T-cell (primary cell): ENCODE measurements at regions of chr12 and their contacts with region 1.

Region 1: DNA sequence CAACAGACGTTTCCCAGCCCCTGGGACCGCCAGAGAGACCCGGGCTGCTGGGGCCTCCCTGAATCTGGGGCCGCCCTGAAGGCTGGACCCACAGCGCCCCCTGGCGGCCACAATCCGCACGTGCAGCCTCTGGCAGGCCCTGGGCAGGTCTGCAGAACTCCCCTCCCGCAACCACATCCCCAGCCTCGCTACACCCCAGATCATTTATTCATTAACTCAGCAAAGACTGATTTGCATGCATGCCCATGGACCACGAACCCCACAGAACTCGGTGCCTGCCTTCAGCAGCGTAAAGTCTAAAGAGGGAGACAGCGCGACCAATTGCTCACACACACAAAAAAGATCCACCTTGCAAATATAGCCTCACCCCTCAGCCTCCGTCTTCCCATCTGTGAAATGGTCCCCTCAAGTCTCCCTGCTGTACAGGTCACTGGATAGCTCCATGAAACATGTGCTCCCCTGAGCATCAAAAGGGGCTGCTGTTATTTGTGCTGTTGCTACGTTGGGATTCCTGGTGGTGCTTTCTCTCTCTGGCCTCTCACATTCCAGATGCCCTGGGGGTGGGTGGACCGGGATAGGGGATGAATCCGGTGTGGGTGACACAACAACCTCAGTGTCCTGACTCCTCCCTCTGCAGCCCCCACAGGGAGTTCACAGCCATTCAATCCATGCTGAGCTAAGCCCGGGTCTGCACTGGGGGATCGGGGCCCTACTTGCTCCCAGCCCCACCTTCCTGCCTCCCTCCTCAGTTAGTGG is 96.4 kb downstream of the SCARB1 start:
- DNase-seq: peak; percentile 60 to 87 (median 81)
- ATAC-seq: peak; percentile 86 to 95 (median 92)
- H3K4me3 ChIP-seq: no peak overlapping the region
- H3K4me3 Mint-ChIP-seq: peak overlapping the region in 1 of 3 donors; percentile 12
- H3K27ac ChIP-seq: no peak overlapping the region
- H3K27ac Mint-ChIP-seq: peak overlapping the region in 1 of 2 donors; percentile 5
- H3K4me1 ChIP-seq: peaks cover 0 to 21% of the 10 kb centered on the region in 2 experiments
- H3K4me1 Mint-ChIP-seq: peaks cover 12 to 15% (median 13%) of the 10 kb centered on the region in 3 donors
- H3K27me3 ChIP-seq: peaks cover 0 to 32% of the 10 kb centered on the region in 2 experiments
- H3K27me3 Mint-ChIP-seq: peaks cover 4 to 6% of the 10 kb centered on the region in 2 donors

Region 2: DNA sequence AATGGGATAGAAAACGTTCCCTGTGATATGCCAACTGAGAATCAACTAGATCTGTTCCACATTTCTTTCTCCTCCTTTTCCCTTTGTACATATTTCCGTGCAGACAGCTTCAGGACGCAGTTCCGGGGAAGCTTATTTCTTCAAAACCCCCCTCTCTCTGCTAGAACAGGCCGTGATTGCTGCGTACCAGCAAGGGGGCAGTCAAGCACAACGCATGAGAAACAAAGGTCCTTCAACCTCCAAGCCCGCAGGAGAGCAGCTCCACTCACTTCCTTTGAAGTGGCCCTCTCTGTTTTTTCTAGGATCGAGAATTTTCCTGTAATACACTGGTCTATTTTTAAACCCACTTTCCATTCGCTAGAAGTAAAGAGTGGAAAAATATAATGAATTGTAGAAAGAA is 713.4 kb before region 1 on chr12:
- CTCF ChIA-PET with region 1: interaction called, 10 to 11 read pairs
- POLR2A ChIA-PET with region 1: no interaction called
- DNase-seq: peak in 1 of 35 experiments; percentile 12
- ATAC-seq: no peak
- H3K4me3 ChIP-seq: no peak overlapping the region
- H3K4me3 Mint-ChIP-seq: no peak overlapping the region
- H3K27ac ChIP-seq: no peak overlapping the region
- H3K27ac Mint-ChIP-seq: no peak overlapping the region
- H3K4me1 ChIP-seq: no peaks in the 10 kb centered on the region
- H3K4me1 Mint-ChIP-seq: no peaks in the 10 kb centered on the region
- H3K27me3 ChIP-seq: peaks cover 0 to 13% of the 10 kb centered on the region in 2 experiments
- H3K27me3 Mint-ChIP-seq: peaks cover 8 to 9% of the 10 kb centered on the region in 2 donors

Region 3: DNA sequence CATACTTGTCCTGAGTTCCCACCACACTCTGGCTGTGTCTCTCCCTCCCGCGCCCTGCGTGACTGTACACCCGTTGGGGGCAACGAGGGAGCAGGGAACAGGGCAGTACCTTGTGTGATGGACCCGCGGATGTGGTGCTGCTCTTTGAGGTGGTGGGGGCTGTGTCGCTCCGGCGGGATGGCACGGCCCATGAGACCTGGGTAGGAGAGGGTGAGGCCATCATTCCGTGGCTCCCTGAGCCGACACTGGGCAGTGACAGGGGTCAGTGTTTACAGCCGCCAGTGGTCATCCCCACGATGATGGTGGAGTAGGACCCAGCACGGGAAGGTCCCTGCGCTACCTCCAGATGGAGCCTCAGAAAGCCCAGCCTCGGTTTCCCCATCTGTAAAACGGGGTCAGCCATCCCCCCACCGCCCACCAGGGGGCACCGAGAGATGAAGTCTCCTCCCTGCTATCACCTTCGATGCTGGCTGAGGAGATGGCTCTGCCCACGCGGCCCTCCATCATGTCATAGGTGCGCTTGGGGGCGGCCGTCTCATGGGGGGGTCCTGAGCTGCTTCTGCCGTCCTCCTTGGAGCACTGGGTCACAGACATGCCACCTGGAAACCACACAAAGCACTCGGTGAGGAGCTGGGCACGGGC is 419.4 kb before region 1 on chr12:
- CTCF ChIA-PET with region 1: interaction called, 4 to 10 read pairs
- POLR2A ChIA-PET with region 1: no interaction called
- DNase-seq: peak in 20 of 35 experiments; percentile 6 to 38 (median 18)
- ATAC-seq: peak in 2 of 4 experiments; percentile 24 to 39
- H3K4me3 ChIP-seq: no peak overlapping the region
- H3K4me3 Mint-ChIP-seq: no peak overlapping the region
- H3K27ac ChIP-seq: no peak overlapping the region
- H3K27ac Mint-ChIP-seq: no peak overlapping the region
- H3K4me1 ChIP-seq: no peaks in the 10 kb centered on the region
- H3K4me1 Mint-ChIP-seq: no peaks in the 10 kb centered on the region
- H3K27me3 ChIP-seq: no peaks in the 10 kb centered on the region
- H3K27me3 Mint-ChIP-seq: no peaks in the 10 kb centered on the region

Region 4: DNA sequence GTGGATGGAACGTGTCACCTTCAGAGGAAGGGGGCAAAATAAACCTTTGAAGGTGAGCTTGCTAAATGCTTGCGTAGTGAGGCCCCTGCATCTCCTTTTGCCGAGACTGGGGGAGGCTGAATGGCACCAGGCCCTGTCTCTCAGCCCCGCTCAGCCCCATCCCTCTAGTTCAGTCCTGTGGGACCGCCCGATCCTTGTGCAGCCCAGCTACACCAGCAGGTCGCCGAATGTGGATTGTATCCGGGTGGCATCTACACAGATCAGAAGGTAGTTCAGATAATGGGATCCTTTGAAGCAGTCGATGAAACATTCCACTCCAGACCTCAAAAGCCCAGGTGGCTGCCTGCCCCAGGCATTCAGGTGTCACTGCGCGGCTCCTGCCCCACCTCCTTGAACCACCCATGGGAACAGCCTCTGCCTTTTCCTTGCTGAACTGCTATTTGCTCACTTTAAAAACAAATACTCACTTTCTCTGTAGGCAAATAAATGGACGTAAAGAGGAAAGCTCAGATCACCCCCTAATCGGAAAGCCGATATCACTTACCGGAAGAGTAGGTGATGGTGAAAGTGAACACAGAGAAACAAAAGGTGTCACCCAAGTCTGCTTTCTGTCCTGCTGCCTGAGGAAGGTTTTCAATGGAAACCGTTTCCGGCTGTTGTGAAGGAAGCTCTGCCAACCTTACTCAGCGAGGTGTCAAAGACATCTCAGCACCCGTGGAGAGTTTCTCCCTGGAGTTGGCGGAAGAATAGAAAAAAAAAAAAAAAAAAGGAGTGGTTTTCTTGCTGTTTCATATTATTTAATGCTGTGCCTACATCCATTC is 99.5 kb before region 1 on chr12:
- CTCF ChIA-PET with region 1: no interaction called
- POLR2A ChIA-PET with region 1: no interaction called
- DNase-seq: no peak
- ATAC-seq: no peak
- H3K4me3 ChIP-seq: no peak overlapping the region
- H3K4me3 Mint-ChIP-seq: no peak overlapping the region
- H3K27ac ChIP-seq: no peak overlapping the region
- H3K27ac Mint-ChIP-seq: no peak overlapping the region
- H3K4me1 ChIP-seq: no peaks in the 10 kb centered on the region
- H3K4me1 Mint-ChIP-seq: no peaks in the 10 kb centered on the region
- H3K27me3 ChIP-seq: peaks cover 0 to 11% of the 10 kb centered on the region in 2 experiments
- H3K27me3 Mint-ChIP-seq: no peaks in the 10 kb centered on the region